ENCODE measurements at regions of chr11 and their contacts with region 1.

Region 1: DNA sequence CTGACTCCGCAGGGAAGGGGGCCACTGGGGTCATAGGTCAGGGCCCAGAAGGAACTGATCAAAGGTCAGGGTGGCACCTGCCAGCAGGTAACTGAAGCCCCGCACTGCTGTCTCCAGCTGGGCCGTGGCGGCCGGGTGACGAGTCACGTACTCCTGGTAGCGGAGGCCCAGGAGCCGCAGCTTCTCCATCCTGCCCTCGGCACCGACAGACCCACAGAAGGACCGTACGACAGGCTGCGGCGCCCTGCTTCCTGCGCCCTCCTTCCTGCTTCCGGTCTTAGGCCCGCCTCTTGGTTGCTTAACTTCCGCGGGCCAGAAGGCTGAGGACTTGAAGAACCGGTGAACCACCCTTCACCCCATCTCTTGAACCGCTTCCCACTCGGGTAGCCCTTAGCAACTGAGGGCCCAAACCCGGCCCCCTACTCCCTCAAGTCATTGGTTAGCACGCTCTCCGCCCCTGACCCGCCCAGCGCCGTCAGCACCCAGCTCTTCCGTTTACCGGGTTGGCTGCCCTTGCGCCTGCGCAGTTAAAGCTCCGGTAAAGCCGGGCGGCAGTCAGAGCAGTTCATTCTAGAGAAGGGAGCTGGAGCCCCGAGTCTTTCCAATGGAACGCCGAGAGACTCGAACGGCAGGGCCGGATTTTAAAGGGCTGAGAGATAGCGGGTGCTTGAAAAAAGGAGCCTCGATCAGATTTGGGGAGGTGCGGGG is at the start of gene PEX16:
- DNase-seq: peak; percentile 93
- ATAC-seq: peak; percentile 94
- H3K4me3 Mint-ChIP-seq: peak within 1 kb of the TSS; percentile 96
- H3K27ac Mint-ChIP-seq: peak within 1 kb of the TSS; percentile 95
- H3K4me1 Mint-ChIP-seq: peaks cover 25% of the 10 kb centered on the region
- H3K27me3 Mint-ChIP-seq: peaks cover 6% of the 10 kb centered on the region
- total RNA-seq, gene PEX16: 49.4 to 61.5 TPM

Region 2: GRCh38 chr11:45804761-45805304 is 112.9 kb before region 1 on chr11 and contains the start of gene SLC35C1:
- POLR2A ChIA-PET with region 1: interaction called, 11 read pairs
- DNase-seq: peak; percentile 98
- ATAC-seq: peak; percentile 89
- H3K4me3 Mint-ChIP-seq: peak within 1 kb of the TSS; percentile 97
- H3K27ac Mint-ChIP-seq: peak within 1 kb of the TSS; percentile 92
- H3K4me1 Mint-ChIP-seq: peaks cover 35% of the 10 kb centered on the region
- H3K27me3 Mint-ChIP-seq: no peaks in the 10 kb centered on the region
- total RNA-seq, gene SLC35C1: 18.0 to 20.2 TPM

Region 3: DNA sequence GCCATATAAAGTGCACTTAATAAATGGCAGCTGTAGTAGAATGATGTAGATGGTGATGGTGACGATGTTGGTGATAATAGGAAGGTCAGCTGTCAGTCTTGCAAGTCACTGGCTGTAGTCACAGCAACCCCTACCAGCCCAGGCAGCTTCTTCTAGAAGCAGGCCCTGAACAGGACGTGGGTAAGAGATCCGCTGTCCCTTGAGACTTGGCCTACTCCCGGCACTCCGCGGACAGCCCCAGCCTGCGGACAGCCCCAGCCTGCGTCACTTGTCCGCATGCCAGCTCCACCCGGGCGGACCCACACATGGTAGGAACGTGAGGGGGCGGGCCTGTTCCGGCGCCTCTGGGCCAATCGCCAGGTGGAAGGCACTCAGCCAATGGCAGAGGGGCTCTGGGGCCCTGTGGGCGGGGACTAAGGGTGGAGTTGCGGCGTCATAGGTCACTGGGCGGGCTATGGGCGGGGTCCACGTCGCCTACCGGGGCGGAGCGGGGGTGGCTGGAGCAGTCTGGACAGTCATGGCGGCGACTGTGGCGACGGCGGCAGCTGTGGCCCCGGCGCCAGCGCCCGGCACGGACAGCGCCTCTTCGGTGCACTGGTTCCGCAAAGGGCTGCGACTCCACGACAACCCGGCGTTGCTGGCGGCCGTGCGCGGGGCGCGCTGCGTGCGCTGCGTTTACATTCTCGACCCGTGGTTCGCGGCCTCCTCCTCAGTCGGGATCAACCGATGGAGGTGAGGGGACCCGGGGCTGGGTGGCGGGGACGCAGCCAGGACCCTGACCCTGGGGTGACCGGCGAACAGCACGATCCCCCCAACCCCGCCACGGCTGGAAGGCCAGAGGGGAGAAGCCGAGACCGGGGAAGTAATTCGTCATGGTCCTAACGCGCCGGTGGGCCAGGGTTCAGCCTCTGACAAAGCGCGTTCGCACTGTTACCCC is 70.5 kb before region 1 on chr11 and contains the start of gene CRY2:
- POLR2A ChIA-PET with region 1: interaction called, 10 read pairs
- DNase-seq: peak; percentile 96
- ATAC-seq: peak; percentile 90
- H3K4me3 Mint-ChIP-seq: peak within 1 kb of the TSS; percentile 88
- H3K27ac Mint-ChIP-seq: peak within 1 kb of the TSS; percentile 86
- H3K4me1 Mint-ChIP-seq: peaks cover 43% of the 10 kb centered on the region
- H3K27me3 Mint-ChIP-seq: peaks cover 14% of the 10 kb centered on the region
- total RNA-seq, gene CRY2: 32.4 to 36.9 TPM

Region 4: GRCh38 chr11:45906096-45906682 is 11.6 kb before region 1 on chr11:
- POLR2A ChIA-PET with region 1: interaction called, 18 read pairs
- DNase-seq: no peak
- ATAC-seq: peak; percentile 21
- H3K4me3 Mint-ChIP-seq: no peak overlapping the region
- H3K27ac Mint-ChIP-seq: no peak overlapping the region
- H3K4me1 Mint-ChIP-seq: peaks cover 2% of the 10 kb centered on the region
- H3K27me3 Mint-ChIP-seq: peaks cover 5% of the 10 kb centered on the region

Region 5: DNA sequence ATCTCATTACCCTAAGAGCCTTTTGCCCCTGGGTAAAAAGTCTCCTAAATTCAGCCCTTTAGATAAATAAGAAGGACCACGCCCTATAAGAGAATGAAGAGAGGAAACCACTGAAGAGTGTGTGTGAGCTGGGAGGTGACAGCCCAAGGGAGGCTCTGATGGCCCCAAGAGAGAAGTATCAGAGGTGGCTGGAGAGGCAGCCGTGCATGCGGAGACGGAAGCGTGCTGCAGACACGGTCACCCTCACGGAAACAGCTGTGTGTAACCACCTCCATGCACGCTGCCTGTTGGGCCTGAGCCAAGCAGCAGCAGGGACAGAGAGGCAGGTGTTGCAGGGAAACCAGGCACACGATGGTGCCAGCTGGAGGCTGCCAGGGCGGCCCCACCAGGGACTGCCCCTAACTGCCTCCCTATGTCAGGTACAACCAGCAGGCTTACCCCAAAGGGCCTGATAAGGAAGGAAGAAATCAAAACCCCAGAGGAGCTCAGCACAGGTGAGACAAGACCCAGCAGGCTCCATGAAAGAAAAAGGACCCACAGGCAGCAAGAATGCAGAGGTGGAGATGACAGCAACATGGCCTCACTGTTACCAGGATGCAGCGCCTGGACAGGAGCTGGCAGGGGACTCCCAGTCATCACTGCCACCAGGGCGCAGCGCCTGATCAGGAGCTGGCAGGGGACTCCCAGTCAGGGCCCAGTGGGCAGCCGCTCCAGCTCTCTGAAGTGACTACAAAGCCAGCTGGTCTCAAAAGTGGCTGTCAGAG is 12.4 kb after region 1 on chr11:
- POLR2A ChIA-PET with region 1: interaction called, 40 read pairs
- DNase-seq: no peak
- ATAC-seq: peak; percentile 83
- H3K4me3 Mint-ChIP-seq: peak overlapping the region; percentile 65
- H3K27ac Mint-ChIP-seq: peak overlapping the region; percentile 82
- H3K4me1 Mint-ChIP-seq: peaks cover 17% of the 10 kb centered on the region
- H3K27me3 Mint-ChIP-seq: no peaks in the 10 kb centered on the region